Left lung (tissue), 14 donors: ENCODE measurements at regions of chr19 and their contacts with region 1.

Region 1: DNA sequence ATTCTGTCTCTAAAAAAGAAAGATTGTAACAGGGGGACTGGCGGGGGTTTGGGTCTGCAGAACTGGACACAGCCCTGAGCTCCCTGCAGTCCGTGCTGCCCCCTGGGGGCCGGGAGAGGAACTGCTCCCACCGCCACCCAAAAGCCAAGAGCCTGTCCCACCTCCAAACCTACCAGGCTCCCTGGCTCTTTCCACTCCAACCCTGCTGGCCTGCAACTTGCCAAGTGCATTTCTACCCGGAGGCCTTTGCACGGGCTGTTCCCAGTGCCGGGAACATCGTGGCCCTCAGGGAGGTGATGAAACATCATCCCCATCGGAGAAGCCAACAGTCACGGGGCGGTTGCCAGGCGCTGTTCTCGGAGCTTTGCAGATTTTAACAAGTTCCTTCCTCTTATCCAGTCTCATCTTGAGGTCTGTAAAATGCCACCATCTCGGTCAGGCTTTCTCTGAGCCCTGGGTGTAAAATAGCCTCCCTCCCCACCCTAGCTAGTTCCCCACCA is 50.7 kb downstream of the SMIM24 start:
- DNase-seq: peak; percentile 60 to 96 (median 86)
- ATAC-seq: peak; percentile 88
- H3K4me3 ChIP-seq: no peak overlapping the region
- H3K27ac ChIP-seq: peak overlapping the region; percentile 75 to 78
- H3K4me1 ChIP-seq: peaks cover 26 to 62% of the 10 kb centered on the region in 2 donors
- H3K27me3 ChIP-seq: no peaks in the 10 kb centered on the region
- CTCF ChIP-seq: peak; percentile 98 to 99

Region 2: GRCh38 chr19:3343619-3344502 is 85.8 kb before region 1 on chr19:
- intact Hi-C with region 1: loop called in 1 of 2 experiments (anchors 10 kb)
- DNase-seq: peak; percentile 79 to 93 (median 86)
- ATAC-seq: peak; percentile 94
- H3K4me3 ChIP-seq: peak overlapping the region; percentile 24 to 30
- H3K27ac ChIP-seq: peak overlapping the region; percentile 73 to 79
- H3K4me1 ChIP-seq: peaks cover 16 to 41% of the 10 kb centered on the region in 2 donors
- H3K27me3 ChIP-seq: no peaks in the 10 kb centered on the region
- CTCF ChIP-seq: no peak

Region 3: GRCh38 chr19:3743486-3743885 is 313.9 kb after region 1 on chr19:
- intact Hi-C with region 1: no loop called
- DNase-seq: no peak
- ATAC-seq: no peak
- H3K4me3 ChIP-seq: no peak overlapping the region
- H3K27ac ChIP-seq: no peak overlapping the region
- H3K4me1 ChIP-seq: no peaks in the 10 kb centered on the region
- H3K27me3 ChIP-seq: no peaks in the 10 kb centered on the region
- CTCF ChIP-seq: no peak